K562 (cell line): ENCODE measurements at regions of chr12 and their contacts with region 1.

Region 1: GRCh38 chr12:54368709-54369583 is 4.7 kb upstream of the GPR84 start:
- DNase-seq: peak; percentile 76 to 96 (median 83)
- ATAC-seq: peak; percentile 85
- H3K4me3 ChIP-seq: peak overlapping the region; percentile 22; the same call in 1 of the 2 replicates
- H3K27ac ChIP-seq: peak overlapping the region; percentile 87
- H3K4me1 ChIP-seq: peaks cover 38 to 42% of the 10 kb centered on the region in 2 experiments
- H3K27me3 ChIP-seq: no peaks in the 10 kb centered on the region
- CTCF ChIP-seq: peak; percentile 96 to 97 (median 96)
- EP300 ChIP-seq: no peak
- POLR2A ChIP-seq: peak; percentile 53
- RAD21 ChIP-seq: peak; percentile 84 to 92

Region 2: GRCh38 chr12:53984901-53985709 is 383.8 kb before region 1 on chr12 and contains the start of gene HOXC10:
- CTCF ChIA-PET with region 1: no interaction called
- POLR2A ChIA-PET with region 1: no interaction called
- in situ Hi-C with region 1: loop called (anchors 10 kb)
- intact Hi-C with region 1: loop called (anchors 10 kb)
- DNase-seq: peak; percentile 91 to 97 (median 92)
- ATAC-seq: peak; percentile 80
- H3K4me3 ChIP-seq: no peak within 1 kb of the TSS; the same call in 1 of the 2 replicates
- H3K27ac ChIP-seq: no peak within 1 kb of the TSS
- H3K4me1 ChIP-seq: peaks cover 29 to 43% of the 10 kb centered on the region in 2 experiments
- H3K27me3 ChIP-seq: peaks cover 18 to 21% of the 10 kb centered on the region in 2 experiments
- CTCF ChIP-seq: peak; percentile 82 to 95 (median 95)
- EP300 ChIP-seq: 0 out of 2 replicates have a peak, but pooled peaks have one; percentile 17
- POLR2A ChIP-seq: no peak
- RAD21 ChIP-seq: peak; percentile 88 to 91
- polyA plus RNA-seq, gene HOXC10: 0.25 to 0.42 TPM

Region 3: GRCh38 chr12:54220092-54220557 is 148.8 kb before region 1 on chr12:
- CTCF ChIA-PET with region 1: interaction called, 22 read pairs
- POLR2A ChIA-PET with region 1: no interaction called
- in situ Hi-C with region 1: loop called (anchors 5 kb)
- intact Hi-C with region 1: loop called (anchors 2 kb)
- DNase-seq: peak; percentile 75 to 88 (median 78)
- ATAC-seq: peak; percentile 81
- H3K4me3 ChIP-seq: no peak overlapping the region
- H3K27ac ChIP-seq: peak overlapping the region; percentile 66
- H3K4me1 ChIP-seq: peaks cover 29 to 34% of the 10 kb centered on the region in 2 experiments; a peak in 4 of 5 replicates
- H3K27me3 ChIP-seq: no peaks in the 10 kb centered on the region
- CTCF ChIP-seq: peak; percentile 91 to 94 (median 93)
- EP300 ChIP-seq: no peak
- POLR2A ChIP-seq: no peak
- RAD21 ChIP-seq: peak; percentile 95 to 98

Region 4: DNA sequence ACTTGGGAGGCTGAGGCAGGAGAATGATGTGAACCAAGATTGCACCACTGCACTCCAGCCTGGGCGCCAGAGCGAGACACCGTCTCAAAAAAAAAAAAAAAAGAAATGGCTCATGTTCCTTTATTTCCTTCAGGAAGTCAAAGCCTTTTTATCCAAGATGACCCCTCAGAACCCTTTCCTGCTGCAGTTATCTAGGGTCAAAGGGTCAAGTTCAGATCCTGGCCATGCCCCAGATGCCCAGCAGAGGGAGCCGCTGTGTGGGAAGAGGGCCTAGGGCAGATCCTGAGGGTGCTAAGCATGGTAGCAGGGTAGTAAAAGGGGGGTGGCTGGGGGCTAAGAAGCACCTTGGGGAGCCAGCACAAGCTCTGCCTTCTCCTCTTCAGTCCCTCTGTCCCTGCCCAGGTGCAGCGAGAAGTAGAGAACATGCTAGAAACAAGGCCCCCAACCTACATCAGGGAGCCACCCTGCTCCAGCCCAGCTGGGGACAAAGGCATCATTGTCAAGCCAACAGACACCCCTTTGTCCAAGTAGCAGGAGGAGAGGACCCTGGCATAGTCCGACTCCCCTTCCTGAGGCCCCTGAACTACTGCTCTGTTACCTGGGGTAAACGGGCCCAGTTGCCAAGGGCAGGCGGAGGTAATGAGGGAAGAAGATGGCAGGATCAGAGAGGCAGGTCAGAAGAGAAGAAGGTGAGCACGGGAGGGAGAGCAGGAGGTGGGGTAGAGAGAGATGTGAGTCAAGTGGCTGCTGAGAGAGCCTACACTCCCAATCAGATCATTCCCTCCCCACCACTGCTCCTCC is 74.6 kb before region 1 on chr12:
- CTCF ChIA-PET with region 1: interaction called, 10 read pairs
- POLR2A ChIA-PET with region 1: interaction called, 5 read pairs
- in situ Hi-C with region 1: loop called (anchors 10 kb)
- intact Hi-C with region 1: no loop called
- DNase-seq: peak; percentile 80 to 93 (median 83)
- ATAC-seq: peak; percentile 34
- H3K4me3 ChIP-seq: peak overlapping the region; percentile 53
- H3K27ac ChIP-seq: peak overlapping the region; percentile 84
- H3K4me1 ChIP-seq: peaks cover 34 to 38% of the 10 kb centered on the region in 2 experiments; a peak in 4 of 5 replicates
- H3K27me3 ChIP-seq: no peaks in the 10 kb centered on the region; a peak in 1 of 5 replicates
- CTCF ChIP-seq: peak; percentile 92 to 96 (median 93)
- EP300 ChIP-seq: peak; percentile 80
- POLR2A ChIP-seq: no peak
- RAD21 ChIP-seq: peak; percentile 92 to 94

Region 5: DNA sequence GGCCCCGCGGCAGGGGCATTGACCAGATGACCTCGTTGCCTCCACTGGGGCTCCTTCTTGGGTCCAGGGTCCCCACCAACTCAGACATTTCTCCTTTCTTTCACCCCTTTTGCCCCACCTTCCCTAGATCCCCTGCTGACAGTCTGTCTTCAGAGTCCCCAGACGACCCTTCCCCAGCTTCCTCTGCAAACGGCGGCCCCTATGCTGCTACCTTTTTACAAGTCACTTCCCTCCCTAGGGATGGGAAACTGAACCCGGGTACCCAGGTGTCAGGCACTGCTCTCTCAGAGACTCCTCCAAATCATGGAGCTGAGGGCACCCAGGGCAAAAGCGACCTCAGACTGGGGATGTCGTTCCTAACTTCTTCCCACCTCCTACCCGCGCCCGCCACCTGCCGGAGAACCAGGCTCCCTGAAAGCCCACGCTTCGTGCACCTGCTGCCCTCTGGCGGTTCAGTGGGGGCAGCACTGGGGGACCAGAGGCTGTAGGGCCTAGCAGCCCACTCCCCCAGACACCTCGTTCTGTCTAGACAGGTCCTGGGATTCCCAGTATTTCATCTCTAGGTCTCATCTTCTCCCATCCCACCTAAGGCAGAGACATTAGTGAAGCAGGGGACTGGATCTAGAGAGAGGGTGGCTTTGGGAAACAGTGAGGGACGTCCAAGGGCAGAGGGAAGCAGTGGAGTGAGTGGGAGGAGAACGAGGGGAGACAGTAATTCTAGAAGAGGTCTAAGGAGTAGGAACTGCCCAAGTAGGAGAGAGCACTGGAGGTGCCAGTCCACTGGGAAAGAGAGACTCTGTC is 10.7 kb after region 1 on chr12:
- CTCF ChIA-PET with region 1: interaction called, 50 read pairs
- POLR2A ChIA-PET with region 1: interaction called, 11 read pairs
- in situ Hi-C with region 1: no loop called
- intact Hi-C with region 1: loop called (anchors 1 kb)
- DNase-seq: peak; percentile 85 to 95 (median 90)
- ATAC-seq: peak; percentile 93
- H3K4me3 ChIP-seq: peak overlapping the region; percentile 36; the same call in 1 of the 2 replicates
- H3K27ac ChIP-seq: peak overlapping the region; percentile 29; the same call in 2 of the 3 replicates
- H3K4me1 ChIP-seq: peaks cover 43 to 49% of the 10 kb centered on the region in 2 experiments
- H3K27me3 ChIP-seq: no peaks in the 10 kb centered on the region
- CTCF ChIP-seq: peak; percentile 100
- EP300 ChIP-seq: peak; percentile 59
- POLR2A ChIP-seq: no peak
- RAD21 ChIP-seq: peak; percentile 89 to 96

Region 6: GRCh38 chr12:54398995-54399793 is 30.2 kb after region 1 on chr12:
- CTCF ChIA-PET with region 1: no interaction called
- POLR2A ChIA-PET with region 1: no interaction called
- in situ Hi-C with region 1: no loop called
- intact Hi-C with region 1: loop called (anchors 1 kb)
- DNase-seq: peak; percentile 85 to 90 (median 87)
- ATAC-seq: peak; percentile 95
- H3K4me3 ChIP-seq: no peak overlapping the region
- H3K27ac ChIP-seq: no peak overlapping the region
- H3K4me1 ChIP-seq: no peaks in the 10 kb centered on the region; a peak in 2 of 5 replicates
- H3K27me3 ChIP-seq: no peaks in the 10 kb centered on the region
- CTCF ChIP-seq: peak; percentile 94 to 99 (median 96)
- EP300 ChIP-seq: no peak
- POLR2A ChIP-seq: no peak; the same call in 1 of the 2 replicates
- RAD21 ChIP-seq: peak; percentile 95

Region 7: GRCh38 chr12:54439521-54440255 is 70.7 kb after region 1 on chr12:
- CTCF ChIA-PET with region 1: interaction called, 8 read pairs
- POLR2A ChIA-PET with region 1: interaction called, 3 read pairs
- in situ Hi-C with region 1: no loop called
- intact Hi-C with region 1: loop called (anchors 1 kb)
- DNase-seq: peak; percentile 58 to 72 (median 70)
- ATAC-seq: peak; percentile 94
- H3K4me3 ChIP-seq: no peak overlapping the region
- H3K27ac ChIP-seq: peak overlapping the region; percentile 35; the same call in 1 of the 3 replicates
- H3K4me1 ChIP-seq: peaks cover 0 to 16% of the 10 kb centered on the region in 2 experiments; a peak in 3 of 5 replicates
- H3K27me3 ChIP-seq: no peaks in the 10 kb centered on the region
- CTCF ChIP-seq: peak; percentile 85 to 95 (median 87)
- EP300 ChIP-seq: no peak
- POLR2A ChIP-seq: no peak
- RAD21 ChIP-seq: peak; percentile 96 to 97

Region 8: GRCh38 chr12:55652352-55652751 is 1283.4 kb after region 1 on chr12:
- CTCF ChIA-PET with region 1: no interaction called
- POLR2A ChIA-PET with region 1: no interaction called
- in situ Hi-C with region 1: no loop called
- intact Hi-C with region 1: no loop called
- DNase-seq: no peak
- ATAC-seq: no peak
- H3K4me3 ChIP-seq: no peak overlapping the region
- H3K27ac ChIP-seq: no peak overlapping the region
- H3K4me1 ChIP-seq: no peaks in the 10 kb centered on the region
- H3K27me3 ChIP-seq: no peaks in the 10 kb centered on the region; a peak in 1 of 5 replicates
- CTCF ChIP-seq: no peak
- EP300 ChIP-seq: no peak
- POLR2A ChIP-seq: no peak
- RAD21 ChIP-seq: no peak